H1 (cell line): ENCODE measurements at regions of chr5 and their contacts with region 1.

Region 1: DNA sequence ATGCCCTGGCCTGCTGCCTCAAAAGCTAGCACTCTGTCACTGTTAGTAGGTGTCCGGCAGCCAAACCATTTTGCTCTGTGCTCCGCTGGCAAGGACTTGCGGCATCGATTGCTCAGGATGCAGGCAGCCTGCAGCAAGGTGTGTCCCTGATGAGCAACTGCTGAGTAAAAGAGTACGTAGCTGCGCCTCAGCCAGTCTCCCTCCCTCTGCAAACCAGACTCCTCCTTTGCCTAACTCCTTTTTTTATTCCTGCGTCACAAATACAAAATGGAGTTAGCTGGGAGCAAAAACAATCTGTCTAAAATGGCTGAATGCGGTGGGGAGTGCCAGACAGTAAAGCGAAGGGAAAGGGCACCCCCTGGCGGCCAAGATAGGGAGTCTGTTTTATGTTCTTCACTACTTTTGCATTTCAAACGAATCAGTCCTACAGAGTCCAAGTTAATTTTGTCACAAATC is 61.1 kb downstream of the DIAPH1 start:
- DNase-seq: peak; percentile 82 to 89
- H3K4me3 ChIP-seq: peak overlapping the region in 1 of 4 experiments; percentile 25; a peak in 2 of 8 replicates
- H3K27ac ChIP-seq: peak overlapping the region; percentile 90
- H3K4me1 ChIP-seq: peaks cover 3 to 18% (median 6%) of the 10 kb centered on the region in 4 experiments; a peak in 6 of 7 replicates
- H3K27me3 ChIP-seq: no peaks in the 10 kb centered on the region
- CTCF ChIP-seq: peak; percentile 65 to 85 (median 81)
- EP300 ChIP-seq: peak in 1 of 2 experiments; percentile 54; a peak in 1 of 3 replicates
- POLR2A ChIP-seq: peak; percentile 44 to 60
- RAD21 ChIP-seq: peak; percentile 84 to 87

Region 2: GRCh38 chr5:141234109-141234667 is 323.5 kb before region 1 on chr5:
- CTCF ChIA-PET with region 1: interaction called, 10 read pairs
- POLR2A ChIA-PET with region 1: no interaction called
- DNase-seq: no peak
- H3K4me3 ChIP-seq: no peak overlapping the region
- H3K27ac ChIP-seq: no peak overlapping the region
- H3K4me1 ChIP-seq: no peaks in the 10 kb centered on the region
- H3K27me3 ChIP-seq: no peaks in the 10 kb centered on the region
- CTCF ChIP-seq: no peak
- EP300 ChIP-seq: no peak
- POLR2A ChIP-seq: no peak
- RAD21 ChIP-seq: peak; percentile 37 to 59

Region 3: DNA sequence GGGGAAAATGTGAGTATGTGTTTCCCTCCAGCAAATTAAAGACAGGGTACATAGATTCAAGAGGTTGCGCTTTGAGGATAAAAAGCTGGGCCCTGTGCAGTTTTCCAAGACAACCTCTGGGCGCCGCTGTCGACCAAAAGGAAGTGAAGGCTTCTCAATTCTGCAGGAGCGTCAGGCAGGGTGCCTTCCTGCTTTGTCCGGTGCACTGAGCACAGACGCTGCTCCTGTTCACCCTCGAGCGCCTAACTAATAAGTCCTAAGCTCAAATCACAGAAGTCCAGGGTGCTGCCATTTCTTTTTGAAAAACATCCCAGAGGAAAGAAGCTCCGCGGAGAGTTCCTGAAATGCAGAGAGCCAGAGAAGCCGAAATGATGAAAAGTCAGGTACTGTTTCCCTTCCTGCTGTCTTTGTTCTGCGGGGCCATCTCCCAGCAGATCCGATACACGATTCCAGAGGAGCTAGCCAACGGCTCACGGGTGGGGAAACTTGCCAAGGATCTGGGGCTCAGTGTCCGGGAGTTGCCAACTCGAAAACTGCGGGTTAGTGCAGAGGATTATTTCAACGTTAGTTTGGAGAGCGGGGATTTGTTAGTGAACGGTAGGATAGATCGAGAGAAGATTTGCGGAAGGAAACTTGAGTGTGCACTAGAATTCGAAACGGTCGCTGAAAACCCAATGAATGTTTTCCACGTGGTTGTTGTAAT is 207.6 kb before region 1 on chr5 and contains the start of gene PCDHGB1:
- CTCF ChIA-PET with region 1: interaction called, 28 read pairs
- POLR2A ChIA-PET with region 1: no interaction called
- DNase-seq: peak in 1 of 2 experiments; percentile 83
- H3K4me3 ChIP-seq: peak within 1 kb of the TSS; percentile 17 to 53 (median 31); a peak in 7 of 8 replicates
- H3K27ac ChIP-seq: no peak within 1 kb of the TSS
- H3K4me1 ChIP-seq: peaks cover 0 to 5% (median under 1%) of the 10 kb centered on the region in 4 experiments; a peak in 1 of 7 replicates
- H3K27me3 ChIP-seq: no peaks in the 10 kb centered on the region
- CTCF ChIP-seq: peak; percentile 69 to 86 (median 75)
- EP300 ChIP-seq: no peak
- POLR2A ChIP-seq: peak in 1 of 2 experiments; percentile 65; a peak in 1 of 3 replicates
- RAD21 ChIP-seq: peak; percentile 74 to 81
- total RNA-seq, gene PCDHGB1: 2.8 and 3.9 TPM in 2 replicates

Region 4: DNA sequence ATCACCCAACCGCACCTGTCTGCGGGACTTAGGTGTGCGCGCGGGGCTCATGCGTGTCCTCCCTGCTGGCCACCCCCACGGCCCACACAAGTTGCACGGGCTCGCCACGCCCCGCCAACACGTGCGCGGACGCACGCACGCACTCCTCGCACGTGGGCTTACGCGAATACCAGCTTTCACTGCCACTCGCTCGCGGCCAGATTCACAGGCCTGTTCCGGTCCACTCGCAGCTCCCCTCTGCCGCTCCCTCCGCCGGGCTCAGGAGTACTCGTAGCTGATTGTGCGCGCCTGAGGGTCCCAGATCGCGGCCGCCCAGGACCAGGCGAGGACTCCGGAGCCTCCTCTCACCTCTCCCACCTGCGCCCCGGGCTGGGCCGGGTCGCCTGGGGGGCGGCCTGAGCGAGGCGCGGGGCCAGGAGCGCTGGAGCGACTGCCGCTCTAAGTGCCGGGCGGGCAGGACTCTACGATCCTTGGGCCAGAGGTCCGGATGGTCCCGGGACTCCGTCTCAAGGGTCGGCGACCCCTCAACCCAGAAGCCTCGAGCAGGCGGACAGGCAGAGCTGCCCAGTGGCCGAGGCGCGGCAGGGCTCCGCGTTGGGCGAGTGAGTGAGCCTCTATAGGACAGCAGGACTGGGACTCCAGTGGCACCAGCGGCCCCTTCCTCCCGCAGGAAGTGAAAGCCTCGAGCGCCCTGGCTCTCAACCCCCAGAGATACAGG is 65.4 kb before region 1 on chr5:
- CTCF ChIA-PET with region 1: interaction called, 14 read pairs
- POLR2A ChIA-PET with region 1: no interaction called
- DNase-seq: no peak
- H3K4me3 ChIP-seq: peak overlapping the region; percentile 17 to 60 (median 46)
- H3K27ac ChIP-seq: no peak overlapping the region
- H3K4me1 ChIP-seq: peaks cover 6 to 37% (median 26%) of the 10 kb centered on the region in 4 experiments
- H3K27me3 ChIP-seq: peaks cover 13 to 40% (median 36%) of the 10 kb centered on the region in 4 experiments; a peak in 6 of 7 replicates
- CTCF ChIP-seq: no peak
- EP300 ChIP-seq: no peak
- POLR2A ChIP-seq: no peak
- RAD21 ChIP-seq: no peak

Region 5: DNA sequence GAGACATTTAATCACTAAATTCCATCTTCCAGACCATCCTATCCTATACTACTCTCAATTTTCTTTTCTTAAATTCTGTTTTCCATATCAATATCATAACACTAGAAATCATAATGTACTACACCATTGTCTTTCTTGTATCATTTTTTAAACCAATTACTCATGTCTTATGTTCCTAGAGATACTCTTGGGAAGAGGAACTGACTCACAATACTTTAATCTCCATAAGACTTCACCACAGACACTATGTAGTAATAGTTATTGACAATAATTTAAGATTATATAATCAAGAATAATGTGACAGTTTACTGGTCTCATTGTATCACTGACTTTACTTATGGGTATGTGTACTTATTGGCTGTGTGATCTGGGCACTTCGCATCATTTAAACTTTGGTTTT is 25.0 kb before region 1 on chr5:
- CTCF ChIA-PET with region 1: interaction called, 18 read pairs
- POLR2A ChIA-PET with region 1: no interaction called
- DNase-seq: no peak
- H3K4me3 ChIP-seq: no peak overlapping the region
- H3K27ac ChIP-seq: no peak overlapping the region
- H3K4me1 ChIP-seq: no peaks in the 10 kb centered on the region
- H3K27me3 ChIP-seq: no peaks in the 10 kb centered on the region
- CTCF ChIP-seq: no peak
- EP300 ChIP-seq: no peak
- POLR2A ChIP-seq: no peak
- RAD21 ChIP-seq: no peak

Region 6: GRCh38 chr5:141605523-141606277 is 48.0 kb after region 1 on chr5:
- CTCF ChIA-PET with region 1: no interaction called
- POLR2A ChIA-PET with region 1: no interaction called
- DNase-seq: no peak
- H3K4me3 ChIP-seq: no peak overlapping the region
- H3K27ac ChIP-seq: no peak overlapping the region
- H3K4me1 ChIP-seq: no peaks in the 10 kb centered on the region; a peak in 1 of 7 replicates
- H3K27me3 ChIP-seq: no peaks in the 10 kb centered on the region
- CTCF ChIP-seq: no peak
- EP300 ChIP-seq: no peak
- POLR2A ChIP-seq: no peak
- RAD21 ChIP-seq: no peak